IMR-90 (cell line): ENCODE measurements at regions of chr13 and their contacts with region 1.

Region 1: DNA sequence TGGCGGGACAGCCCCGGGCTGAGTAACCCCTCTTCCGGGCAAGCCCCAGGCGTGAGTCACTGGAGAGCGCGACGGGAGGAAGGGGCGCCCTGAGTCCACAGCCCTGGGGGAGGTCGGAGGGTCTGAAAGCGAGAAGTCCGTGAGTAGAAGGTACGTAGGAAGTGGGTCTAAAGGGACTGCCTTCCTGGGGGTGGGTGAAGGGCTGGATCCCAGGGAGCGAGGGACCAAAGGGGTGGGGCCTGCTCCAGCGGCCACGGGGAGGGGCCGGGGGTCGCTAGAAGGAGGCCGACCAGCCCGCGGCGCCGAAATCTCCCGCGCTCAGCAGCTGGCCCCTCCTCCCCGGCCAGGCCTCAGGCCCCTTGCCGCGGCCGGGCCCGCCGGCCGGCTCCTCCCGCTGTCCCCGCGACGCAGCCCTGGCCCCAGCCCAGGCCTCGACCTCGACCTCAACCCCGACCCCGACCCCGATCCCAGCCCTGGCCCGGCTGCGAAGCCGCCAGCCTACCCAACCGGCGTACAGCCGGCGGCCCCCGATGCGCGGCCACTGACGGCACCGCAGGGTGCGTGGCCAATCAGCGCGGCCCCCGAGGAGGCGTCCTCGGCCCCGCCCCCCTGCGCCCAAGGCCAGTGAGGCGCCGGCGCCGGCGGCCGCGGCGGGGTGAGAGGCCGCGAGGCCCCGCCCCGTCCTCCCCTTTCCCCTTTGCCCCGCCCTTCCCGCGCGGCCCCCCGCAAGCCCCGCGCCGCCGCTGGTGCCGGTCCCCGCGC is 22.6 kb downstream of the IPO5 start:
- DNase-seq: peak; percentile 79
- ATAC-seq: peak; percentile 96
- H3K4me3 ChIP-seq: peak overlapping the region; percentile 98
- H3K27ac ChIP-seq: peak overlapping the region; percentile 64
- H3K4me1 ChIP-seq: peaks cover 4% of the 10 kb centered on the region; the same call in 1 of the 2 replicates
- H3K27me3 ChIP-seq: no peaks in the 10 kb centered on the region
- CTCF ChIP-seq: no peak
- POLR2A ChIP-seq: peak; percentile 85
- RAD21 ChIP-seq: no peak

Region 2: GRCh38 chr13:97879646-97880310 is 96.3 kb before region 1 on chr13:
- CTCF ChIA-PET with region 1: interaction called, 3 read pairs
- POLR2A ChIA-PET with region 1: no interaction called
- dilution Hi-C with region 1: no loop called
- in situ Hi-C with region 1: no loop called
- intact Hi-C with region 1: loop called (anchors 10 kb)
- DNase-seq: peak; percentile 91
- ATAC-seq: peak; percentile 90
- H3K4me3 ChIP-seq: no peak overlapping the region
- H3K27ac ChIP-seq: peak overlapping the region; percentile 98
- H3K4me1 ChIP-seq: peaks cover 18% of the 10 kb centered on the region
- H3K27me3 ChIP-seq: no peaks in the 10 kb centered on the region
- CTCF ChIP-seq: no peak
- POLR2A ChIP-seq: no peak
- RAD21 ChIP-seq: no peak; the same call in 1 of the 2 replicates